ENCODE measurements at regions of chr20 and their contacts with region 1.

Region 1: GRCh38 chr20:53157443-53158408 is 185.6 kb downstream of the TSHZ2 start:
- DNase-seq: no peak
- H3K4me3 Mint-ChIP-seq: no peak overlapping the region
- H3K27ac Mint-ChIP-seq: peak overlapping the region; percentile 28
- H3K4me1 Mint-ChIP-seq: peaks cover 49% of the 10 kb centered on the region
- H3K27me3 Mint-ChIP-seq: no peaks in the 10 kb centered on the region

Region 2: DNA sequence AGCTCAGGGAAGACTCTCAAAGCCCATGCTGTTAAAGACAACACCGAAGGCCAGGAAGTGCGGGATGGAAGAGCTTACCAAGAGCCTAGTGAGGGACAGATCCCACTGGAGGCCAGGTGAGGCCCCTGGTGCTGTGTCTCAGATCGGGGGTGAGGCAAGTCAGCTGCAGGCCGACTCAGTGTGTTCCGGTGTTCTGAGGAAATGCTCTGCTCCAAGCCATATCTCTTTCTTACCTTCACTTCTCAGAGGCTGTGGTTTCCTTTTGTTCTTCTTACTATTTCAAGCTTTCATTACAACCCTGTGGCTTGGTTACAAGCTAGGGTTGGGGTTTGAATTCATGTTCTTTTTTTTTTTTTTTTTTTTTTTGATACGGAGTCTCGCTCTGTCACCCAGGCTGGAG is 851.9 kb before region 1 on chr20:
- intact Hi-C with region 1: loop called (anchors 10 kb)
- DNase-seq: peak; percentile 27
- H3K4me3 Mint-ChIP-seq: no peak overlapping the region
- H3K27ac Mint-ChIP-seq: peak overlapping the region; percentile 65
- H3K4me1 Mint-ChIP-seq: peaks cover 41% of the 10 kb centered on the region
- H3K27me3 Mint-ChIP-seq: no peaks in the 10 kb centered on the region

Region 3: DNA sequence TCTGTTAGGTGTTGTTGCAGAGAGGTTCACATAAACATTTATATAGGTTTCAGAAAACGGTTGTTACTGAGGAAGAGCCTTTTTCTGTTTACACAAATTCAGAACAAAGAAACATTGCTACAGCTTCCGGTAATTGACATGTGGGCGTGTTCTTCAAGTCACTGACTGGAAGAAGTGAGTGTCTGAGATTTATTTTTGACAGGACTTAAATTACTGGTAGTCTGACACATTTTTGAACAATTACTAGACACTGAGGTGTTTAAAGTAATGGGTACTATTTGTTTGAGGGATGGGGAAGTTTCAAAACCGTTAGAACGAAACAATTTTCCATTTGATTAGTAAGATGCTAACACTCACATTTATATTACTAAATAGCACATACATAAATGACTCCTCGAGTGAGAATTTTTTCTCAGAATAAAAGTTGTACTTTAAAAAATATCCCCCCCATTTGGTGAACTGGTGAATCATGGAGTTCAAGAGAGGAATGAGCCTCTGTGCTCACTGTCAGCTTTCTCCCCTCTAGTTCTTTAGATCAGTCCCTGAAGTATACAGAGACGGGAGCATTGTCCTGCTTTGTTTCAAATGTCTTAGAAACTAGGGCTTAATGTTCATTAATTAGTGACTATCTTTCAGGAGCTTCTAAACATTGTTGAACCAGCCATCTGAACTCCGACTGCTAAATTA is 86.9 kb before region 1 on chr20:
- intact Hi-C with region 1: loop called (anchors 2 kb)
- DNase-seq: no peak
- H3K4me3 Mint-ChIP-seq: no peak overlapping the region
- H3K27ac Mint-ChIP-seq: peak overlapping the region; percentile 69
- H3K4me1 Mint-ChIP-seq: peaks cover 28% of the 10 kb centered on the region
- H3K27me3 Mint-ChIP-seq: no peaks in the 10 kb centered on the region

Region 4: DNA sequence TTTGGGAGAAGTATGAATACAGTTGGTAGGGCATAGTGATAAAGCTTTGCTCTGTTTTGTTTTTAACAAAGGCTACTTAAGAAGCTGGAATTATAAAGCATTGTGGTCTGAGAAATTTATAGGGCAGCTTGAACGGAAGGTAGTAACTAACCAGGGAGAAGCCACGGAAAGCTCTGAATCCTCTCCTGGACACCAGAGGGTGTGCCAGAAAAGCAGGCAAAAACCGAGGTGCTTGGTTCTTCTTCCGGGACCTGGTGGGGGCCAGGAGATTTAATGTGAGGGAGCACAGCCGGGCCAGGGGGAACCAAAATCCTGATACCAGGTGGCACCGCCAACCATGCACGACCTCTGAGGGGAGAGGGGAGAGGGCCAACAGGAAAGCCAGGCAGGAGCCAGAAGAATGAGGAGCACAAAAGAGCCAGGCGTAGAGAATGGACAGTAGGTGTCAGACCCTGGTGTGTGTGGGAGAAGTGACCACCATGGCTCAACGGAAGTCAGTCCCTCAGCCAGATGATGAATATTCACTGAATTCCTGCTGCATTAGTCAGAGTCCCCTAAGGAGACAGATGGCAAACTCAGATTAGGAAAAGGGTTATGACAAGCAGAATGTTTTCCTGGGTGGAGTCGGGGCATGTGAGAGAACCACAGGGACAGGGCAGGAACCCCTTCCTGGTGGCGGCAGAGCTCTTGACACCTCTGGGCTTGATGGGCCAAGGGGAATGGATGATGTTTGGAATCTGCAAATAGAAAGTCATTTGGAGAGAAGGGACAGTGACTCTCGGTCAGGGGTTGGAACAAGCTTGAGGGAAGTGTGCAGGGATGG is 173.6 kb after region 1 on chr20:
- intact Hi-C with region 1: no loop called
- DNase-seq: no peak
- H3K4me3 Mint-ChIP-seq: no peak overlapping the region
- H3K27ac Mint-ChIP-seq: no peak overlapping the region
- H3K4me1 Mint-ChIP-seq: peaks cover 3% of the 10 kb centered on the region
- H3K27me3 Mint-ChIP-seq: no peaks in the 10 kb centered on the region

Region 5: GRCh38 chr20:53949319-53949889 is 791.7 kb after region 1 on chr20:
- intact Hi-C with region 1: loop called (anchors 5 kb)
- DNase-seq: peak; percentile 79
- H3K4me3 Mint-ChIP-seq: peak overlapping the region; percentile 49
- H3K27ac Mint-ChIP-seq: peak overlapping the region; percentile 90
- H3K4me1 Mint-ChIP-seq: peaks cover 31% of the 10 kb centered on the region
- H3K27me3 Mint-ChIP-seq: no peaks in the 10 kb centered on the region